ENCODE measurements at regions of chr3 and their contacts with region 1.

Region 1: DNA sequence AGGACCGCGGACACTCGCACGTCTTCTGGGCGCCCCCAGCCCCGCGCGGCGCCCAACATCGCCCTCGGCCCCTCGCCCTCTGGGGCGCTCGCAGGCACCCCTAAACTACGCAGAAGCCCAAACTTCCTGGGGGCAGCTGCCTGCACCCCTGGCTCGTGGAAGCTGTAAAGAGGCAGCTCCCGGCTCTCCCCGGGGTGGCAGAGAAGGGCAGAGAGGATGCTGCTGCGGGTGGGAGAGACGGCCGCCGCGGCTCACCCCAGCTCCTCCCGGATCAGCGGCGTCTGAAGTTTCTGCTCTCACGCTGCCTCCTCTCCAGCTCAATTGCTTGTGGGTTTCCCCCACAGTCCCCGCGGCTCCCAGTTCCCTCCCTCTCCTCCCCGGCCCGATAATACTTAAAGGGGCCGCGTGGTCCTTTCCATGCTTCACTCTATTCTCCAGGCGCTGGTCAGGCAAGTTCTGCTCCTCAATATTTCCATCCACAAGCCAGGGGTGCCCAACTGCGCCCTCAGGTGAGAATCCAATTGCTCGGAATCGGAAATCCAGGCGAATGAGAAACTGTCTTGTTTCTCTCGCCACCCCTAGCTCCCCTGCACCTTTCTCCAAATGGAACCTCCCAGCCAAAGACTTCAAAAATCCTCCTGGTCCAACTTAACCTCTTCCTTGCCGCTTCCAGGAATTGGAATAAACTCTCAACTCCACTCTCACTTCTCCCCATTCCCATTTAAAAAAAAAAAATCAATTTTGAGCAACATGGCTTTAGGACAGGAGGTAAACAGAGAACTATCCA is 748.5 kb downstream of the ROBO1 start:
- DNase-seq: peak; percentile 78 to 96 (median 90)

Region 2: DNA sequence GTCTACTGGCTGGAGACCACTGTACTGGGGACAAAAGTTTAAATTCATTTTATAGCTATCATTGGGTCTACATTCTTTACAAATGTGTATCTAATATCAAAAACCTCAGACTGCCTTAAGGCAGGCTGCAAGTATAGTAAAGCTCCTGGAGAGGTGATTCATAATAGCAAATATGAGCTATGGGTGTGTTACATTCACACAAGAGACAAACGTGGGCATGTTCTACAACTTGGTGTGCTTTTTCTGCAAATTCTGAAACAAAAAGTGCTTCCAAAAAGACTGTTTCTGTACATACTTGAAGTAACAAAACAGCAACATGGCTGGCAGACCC is 352.9 kb before region 1 on chr3:
- intact Hi-C with region 1: loop called (anchors 10 kb)
- DNase-seq: peak in 2 of 42 donors; percentile 7 to 9

Measured in head of caudate nucleus (tissue), 42 donors.